ENCODE measurements at regions of chr19 and their contacts with region 1.

Region 1: GRCh38 chr19:45607071-45608029 is 5.3 kb upstream of the GPR4 start:
- DNase-seq: peak; percentile 77 to 85
- ATAC-seq: peak; percentile 63 to 90 (median 84)
- H3K4me3 ChIP-seq: peak overlapping the region; percentile 33
- H3K27ac ChIP-seq: no peak overlapping the region
- H3K4me1 ChIP-seq: no peaks in the 10 kb centered on the region
- H3K27me3 ChIP-seq: peaks cover 0 to 18% (median 3%) of the 10 kb centered on the region in 3 donors
- CTCF ChIP-seq: peak; percentile 80

Region 2: GRCh38 chr19:45643024-45643926 is 35.9 kb after region 1 on chr19:
- intact Hi-C with region 1: loop called (anchors 1 to 2 kb)
- DNase-seq: peak; percentile 83 to 91
- ATAC-seq: peak; percentile 58 to 77 (median 72)
- H3K4me3 ChIP-seq: no peak overlapping the region
- H3K27ac ChIP-seq: no peak overlapping the region
- H3K4me1 ChIP-seq: peaks cover 19% of the 10 kb centered on the region
- H3K27me3 ChIP-seq: peaks cover 0 to 31% (median 0%) of the 10 kb centered on the region in 3 donors
- CTCF ChIP-seq: peak; percentile 99